ENCODE measurements at regions of chr3 and their contacts with region 1.

Region 1: DNA sequence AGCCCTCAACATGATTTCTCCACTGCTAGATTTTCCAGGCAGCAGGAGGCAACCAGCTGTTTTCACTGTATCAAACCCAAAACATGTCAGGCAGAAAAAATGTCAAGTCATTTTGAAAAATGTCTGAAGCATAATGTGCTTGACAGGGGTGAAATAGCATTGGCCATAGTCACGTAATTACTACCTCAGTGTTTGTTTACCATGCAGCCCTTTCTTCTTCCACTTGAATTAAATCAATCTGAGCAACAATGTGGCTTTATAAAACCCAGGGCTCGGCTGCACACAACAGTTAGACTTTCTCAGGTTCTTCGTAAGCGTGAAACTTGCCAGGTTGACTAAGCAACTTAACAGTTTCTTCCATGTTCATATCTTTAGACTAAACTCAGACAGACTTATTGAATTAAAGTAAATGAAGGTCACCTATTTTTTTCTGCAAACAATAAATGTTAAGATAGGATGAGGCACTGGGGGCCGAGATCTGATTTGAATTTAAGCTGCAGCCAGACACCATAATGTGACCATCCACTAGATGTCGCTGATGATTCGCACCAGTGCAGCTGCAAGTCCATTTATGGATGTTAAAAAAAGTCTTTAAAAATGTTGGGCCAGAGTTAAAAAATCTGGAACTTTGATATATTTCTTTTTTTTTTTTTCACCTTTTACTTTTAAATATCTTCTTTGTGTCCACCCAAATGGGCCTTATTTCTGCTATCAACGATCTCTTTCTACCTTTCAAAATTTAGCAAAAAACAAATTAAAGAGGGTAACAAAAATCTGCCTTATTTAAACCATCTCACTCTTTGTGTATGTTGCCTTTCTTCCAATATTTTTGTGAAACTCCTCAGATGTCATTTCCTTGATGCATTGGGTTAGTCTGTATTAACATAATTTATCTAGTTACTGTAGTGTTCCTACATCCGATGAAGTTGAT is 305.9 kb downstream of the CACNA2D3 start:
- DNase-seq: peak; percentile 76
- ATAC-seq: peak; percentile 90
- H3K4me3 ChIP-seq: no peak overlapping the region
- H3K27ac ChIP-seq: no peak overlapping the region
- H3K4me1 ChIP-seq: no peaks in the 10 kb centered on the region
- H3K27me3 ChIP-seq: no peaks in the 10 kb centered on the region
- CTCF ChIP-seq: peak; percentile 88
- POLR2A ChIP-seq: no peak
- RAD21 ChIP-seq: peak; percentile 83

Region 2: DNA sequence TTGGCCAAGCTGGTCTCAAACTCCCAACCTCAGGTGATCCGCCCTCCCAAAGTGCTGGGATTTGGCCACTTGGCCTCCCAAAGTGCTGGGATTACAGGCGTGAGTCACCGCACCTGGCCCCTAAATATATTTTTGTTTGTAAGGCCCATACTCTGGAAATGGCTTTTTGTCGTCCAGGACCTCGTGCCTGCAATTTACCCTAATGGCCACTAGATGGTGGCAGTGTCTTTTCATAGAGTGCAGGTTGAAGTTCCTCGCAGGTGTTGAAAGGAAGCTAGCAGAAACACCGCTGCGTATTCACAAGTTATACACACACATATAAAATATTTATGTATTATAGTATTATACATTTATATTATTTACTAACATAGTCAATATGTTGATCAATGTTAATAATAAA is 402.5 kb after region 1 on chr3:
- CTCF ChIA-PET with region 1: no interaction called
- POLR2A ChIA-PET with region 1: no interaction called
- dilution Hi-C with region 1: no loop called
- in situ Hi-C with region 1: loop called (anchors 25 kb)
- intact Hi-C with region 1: loop called (anchors 5 kb)
- DNase-seq: peak; percentile 36
- ATAC-seq: no peak
- H3K4me3 ChIP-seq: no peak overlapping the region
- H3K27ac ChIP-seq: no peak overlapping the region
- H3K4me1 ChIP-seq: 0 out of 2 replicates have a peak, but pooled peaks cover 1% of the 10 kb centered on the region
- H3K27me3 ChIP-seq: peaks cover 7% of the 10 kb centered on the region
- CTCF ChIP-seq: peak; percentile 62
- POLR2A ChIP-seq: no peak
- RAD21 ChIP-seq: peak; percentile 75

Region 3: DNA sequence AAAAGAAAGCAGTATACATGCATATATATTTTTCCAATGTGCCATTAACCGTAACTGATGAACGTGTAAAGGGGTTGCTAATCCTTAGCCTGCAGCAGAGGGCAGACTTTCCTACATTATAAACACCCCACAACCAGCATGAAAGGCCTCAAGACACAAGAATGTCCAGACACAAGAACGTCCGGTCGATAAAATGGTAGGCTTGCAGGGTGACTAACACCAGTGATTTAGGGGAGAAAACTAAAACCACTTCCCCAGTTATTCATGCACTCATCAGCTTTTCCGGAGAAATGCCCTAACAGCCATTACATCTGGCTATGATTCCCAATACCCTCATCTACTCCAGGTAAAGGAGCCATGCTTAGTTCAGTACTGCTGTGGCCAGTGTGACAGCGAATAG is 442.2 kb after region 1 on chr3:
- CTCF ChIA-PET with region 1: no interaction called
- POLR2A ChIA-PET with region 1: no interaction called
- dilution Hi-C with region 1: no loop called
- in situ Hi-C with region 1: no loop called
- intact Hi-C with region 1: loop called (anchors 5 kb)
- DNase-seq: peak; percentile 97
- ATAC-seq: peak; percentile 98
- H3K4me3 ChIP-seq: no peak overlapping the region
- H3K27ac ChIP-seq: peak overlapping the region; percentile 70
- H3K4me1 ChIP-seq: peaks cover 3% of the 10 kb centered on the region
- H3K27me3 ChIP-seq: no peaks in the 10 kb centered on the region
- CTCF ChIP-seq: peak; percentile 88
- POLR2A ChIP-seq: peak; percentile 40; the same call in 1 of the 2 replicates
- RAD21 ChIP-seq: peak; percentile 92

Region 4: DNA sequence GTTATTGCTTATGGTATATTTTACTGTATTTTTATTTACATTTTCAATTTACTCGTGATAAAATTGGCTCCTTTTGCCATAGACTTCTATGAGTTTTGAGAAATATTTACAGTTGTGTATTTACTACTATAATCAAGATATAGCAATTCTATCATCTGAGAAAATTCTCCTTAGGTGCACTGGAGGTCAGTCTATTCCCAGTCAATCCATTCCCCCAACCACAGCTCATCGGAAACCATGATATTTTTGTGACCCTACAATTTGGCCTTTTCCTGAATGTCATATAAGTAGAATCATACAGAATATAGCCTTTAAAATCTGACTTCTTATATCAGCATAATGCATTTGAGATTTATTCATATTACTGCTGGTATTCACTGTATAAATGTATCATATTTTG is 614.4 kb after region 1 on chr3:
- CTCF ChIA-PET with region 1: no interaction called
- POLR2A ChIA-PET with region 1: no interaction called
- dilution Hi-C with region 1: no loop called
- in situ Hi-C with region 1: no loop called
- intact Hi-C with region 1: loop called (anchors 2 kb)
- DNase-seq: peak; percentile 30
- ATAC-seq: peak; percentile 40; the same call in 1 of the 2 replicates
- H3K4me3 ChIP-seq: no peak overlapping the region
- H3K27ac ChIP-seq: no peak overlapping the region
- H3K4me1 ChIP-seq: no peaks in the 10 kb centered on the region
- H3K27me3 ChIP-seq: no peaks in the 10 kb centered on the region
- CTCF ChIP-seq: peak; percentile 41
- POLR2A ChIP-seq: no peak
- RAD21 ChIP-seq: peak; percentile 73

Measured in IMR-90 (cell line).